ENCODE measurements at regions of chr4 and their contacts with region 1.

Region 1: DNA sequence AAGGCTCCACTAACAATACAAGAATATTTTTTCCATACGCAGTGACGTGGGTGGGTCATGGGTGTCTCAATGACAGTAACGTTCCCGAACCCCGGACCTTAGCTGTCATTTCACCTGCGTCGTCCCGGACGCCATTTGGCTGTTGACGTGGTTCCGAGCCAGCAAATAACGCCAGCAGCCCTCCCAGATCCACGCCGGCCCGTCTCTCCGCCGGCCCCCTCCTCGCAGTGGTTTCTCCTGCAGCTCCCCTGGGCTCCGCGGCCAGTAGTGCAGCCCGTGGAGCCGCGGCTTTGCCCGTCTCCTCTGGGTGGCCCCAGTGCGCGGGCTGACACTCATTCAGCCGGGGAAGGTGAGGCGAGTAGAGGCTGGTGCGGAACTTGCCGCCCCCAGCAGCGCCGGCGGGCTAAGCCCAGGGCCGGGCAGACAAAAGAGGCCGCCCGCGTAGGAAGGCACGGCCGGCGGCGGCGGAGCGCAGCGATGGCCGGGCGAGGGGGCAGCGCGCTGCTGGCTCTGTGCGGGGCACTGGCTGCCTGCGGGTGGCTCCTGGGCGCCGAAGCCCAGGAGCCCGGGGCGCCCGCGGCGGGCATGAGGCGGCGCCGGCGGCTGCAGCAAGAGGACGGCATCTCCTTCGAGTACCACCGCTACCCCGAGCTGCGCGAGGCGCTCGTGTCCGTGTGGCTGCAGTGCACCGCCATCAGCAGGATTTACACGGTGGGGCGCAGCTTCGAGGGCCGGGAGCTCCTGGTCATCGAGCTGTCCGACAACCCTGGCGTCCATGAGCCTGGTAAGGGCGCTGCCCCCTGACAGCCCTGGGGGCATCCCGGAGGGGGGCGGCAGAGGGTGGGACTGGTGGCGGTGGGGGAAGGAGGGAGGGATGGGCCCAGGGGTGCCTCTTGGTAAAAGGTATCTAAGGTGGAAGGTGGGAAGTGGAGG is at the start of gene CPE:
- DNase-seq: peak; percentile 83 to 93
- H3K4me3 ChIP-seq: peak within 1 kb of the TSS; percentile 68 to 80
- H3K27ac ChIP-seq: peak within 1 kb of the TSS; percentile 90 to 91
- H3K4me1 ChIP-seq: peaks cover 0 to 36% (median 4%) of the 10 kb centered on the region in 4 donors
- H3K27me3 ChIP-seq: no peaks in the 10 kb centered on the region
- CTCF ChIP-seq: peak; percentile 69 to 80

Region 2: DNA sequence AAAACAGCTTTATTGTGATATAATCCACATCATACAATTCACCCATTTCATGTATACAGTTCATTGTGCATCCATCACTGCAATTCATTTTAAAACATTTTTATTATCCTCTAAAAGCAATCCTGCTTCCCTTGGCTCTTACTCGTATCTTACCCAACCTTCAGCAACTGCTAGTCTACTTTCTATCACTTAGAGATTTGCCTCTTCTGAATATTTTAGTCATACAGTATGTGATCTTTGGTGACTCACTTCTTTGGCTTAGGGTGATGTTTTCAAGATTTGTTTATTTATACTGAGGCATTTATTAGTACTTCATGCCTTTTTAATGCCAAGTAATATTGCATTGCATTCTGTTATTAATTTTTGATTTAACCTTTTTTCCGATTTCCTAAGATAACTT is 66.5 kb before region 1 on chr4:
- intact Hi-C with region 1: no loop called
- DNase-seq: no peak
- H3K4me3 ChIP-seq: no peak overlapping the region
- H3K27ac ChIP-seq: no peak overlapping the region
- H3K4me1 ChIP-seq: no peaks in the 10 kb centered on the region
- H3K27me3 ChIP-seq: no peaks in the 10 kb centered on the region
- CTCF ChIP-seq: no peak

Region 3: GRCh38 chr4:165327211-165328100 is 51.6 kb before region 1 on chr4 and contains the start of gene MSMO1:
- intact Hi-C with region 1: loop called (anchors 10 kb)
- DNase-seq: peak; percentile 99 to 100
- H3K4me3 ChIP-seq: peak within 1 kb of the TSS; percentile 64 to 75
- H3K27ac ChIP-seq: peak within 1 kb of the TSS; percentile 72 to 82
- H3K4me1 ChIP-seq: peaks cover 0 to 29% (median 13%) of the 10 kb centered on the region in 4 donors
- H3K27me3 ChIP-seq: no peaks in the 10 kb centered on the region
- CTCF ChIP-seq: no peak